ENCODE measurements at regions of chrX and their contacts with region 1.

Region 1: DNA sequence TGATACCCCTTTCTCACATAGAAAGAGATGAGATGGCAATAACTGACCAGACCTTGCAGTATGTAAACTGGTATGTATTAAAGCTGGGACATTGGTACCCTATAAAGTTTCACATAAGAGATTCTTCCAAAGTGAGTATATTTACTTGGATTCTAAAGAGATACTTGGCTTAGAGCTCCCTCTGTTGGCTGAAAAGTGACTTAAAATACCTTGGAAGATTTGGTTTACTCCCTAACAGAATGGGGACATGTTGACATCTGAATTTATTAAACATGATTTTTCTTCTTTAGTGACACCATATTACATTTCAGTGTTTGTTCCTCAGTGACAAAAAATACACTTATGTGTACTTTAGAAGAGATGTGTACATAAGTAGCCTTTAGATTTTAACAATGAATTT is 47.9 kb upstream of the RGN start:
- DNase-seq: peak; percentile 68
- ATAC-seq: no peak
- H3K4me3 ChIP-seq: no peak overlapping the region
- H3K27ac ChIP-seq: no peak overlapping the region
- H3K4me1 ChIP-seq: no peaks in the 10 kb centered on the region
- H3K27me3 ChIP-seq: peaks cover 8% of the 10 kb centered on the region
- CTCF ChIP-seq: peak; percentile 74
- POLR2A ChIP-seq: no peak
- RAD21 ChIP-seq: peak; percentile 73

Region 2: DNA sequence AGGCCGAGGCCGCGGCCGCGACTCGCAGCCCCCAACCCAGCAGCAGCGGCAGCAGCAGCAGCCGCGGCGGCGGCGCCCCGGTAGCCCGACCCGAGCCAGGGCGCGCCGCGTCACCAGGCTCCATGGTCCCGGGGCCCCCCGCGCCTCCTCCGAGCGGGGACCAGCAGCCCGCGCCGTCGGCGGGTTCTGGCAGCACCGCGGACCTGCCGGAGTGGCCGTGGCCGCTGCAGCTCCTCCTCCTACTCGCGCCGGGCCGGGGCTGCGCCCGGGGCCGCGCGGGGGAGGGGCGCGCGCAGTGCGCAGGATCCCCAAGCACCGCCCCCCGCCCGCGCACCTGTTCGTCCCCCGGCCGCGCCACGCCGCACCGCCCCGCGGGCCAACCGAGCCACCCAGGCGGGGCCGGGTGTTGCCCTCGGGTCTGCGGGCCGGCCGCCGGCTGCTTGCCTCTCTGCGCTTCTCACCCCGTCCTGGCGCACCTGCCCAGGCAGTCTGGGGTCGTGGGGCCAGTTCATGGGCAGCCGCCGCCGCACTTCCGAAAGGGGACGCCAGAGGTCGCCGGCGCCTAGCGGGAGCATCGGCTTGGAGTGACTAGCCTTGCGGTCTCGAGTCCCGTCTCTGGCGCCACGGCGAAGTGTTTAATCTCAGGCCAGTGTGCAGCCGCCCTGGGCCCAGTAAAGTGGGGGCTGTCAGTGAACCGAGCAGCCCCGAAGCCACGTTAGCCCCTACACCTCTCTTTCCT is 271.3 kb before region 1 on chrX and contains the start of gene SLC9A7:
- CTCF ChIA-PET with region 1: interaction called, 3 read pairs
- POLR2A ChIA-PET with region 1: no interaction called
- dilution Hi-C with region 1: no loop called
- in situ Hi-C with region 1: no loop called
- intact Hi-C with region 1: loop called (anchors 1 kb)
- DNase-seq: peak; percentile 61
- ATAC-seq: peak; percentile 86
- H3K4me3 ChIP-seq: peak within 1 kb of the TSS; percentile 83
- H3K27ac ChIP-seq: peak within 1 kb of the TSS; percentile 33; the same call in 1 of the 2 replicates
- H3K4me1 ChIP-seq: peaks cover 5% of the 10 kb centered on the region
- H3K27me3 ChIP-seq: no peaks in the 10 kb centered on the region
- CTCF ChIP-seq: peak; percentile 77
- POLR2A ChIP-seq: no peak
- RAD21 ChIP-seq: peak; percentile 92
- total RNA-seq, gene SLC9A7: 67.5 and 76.4 TPM in 2 replicates

Region 3: DNA sequence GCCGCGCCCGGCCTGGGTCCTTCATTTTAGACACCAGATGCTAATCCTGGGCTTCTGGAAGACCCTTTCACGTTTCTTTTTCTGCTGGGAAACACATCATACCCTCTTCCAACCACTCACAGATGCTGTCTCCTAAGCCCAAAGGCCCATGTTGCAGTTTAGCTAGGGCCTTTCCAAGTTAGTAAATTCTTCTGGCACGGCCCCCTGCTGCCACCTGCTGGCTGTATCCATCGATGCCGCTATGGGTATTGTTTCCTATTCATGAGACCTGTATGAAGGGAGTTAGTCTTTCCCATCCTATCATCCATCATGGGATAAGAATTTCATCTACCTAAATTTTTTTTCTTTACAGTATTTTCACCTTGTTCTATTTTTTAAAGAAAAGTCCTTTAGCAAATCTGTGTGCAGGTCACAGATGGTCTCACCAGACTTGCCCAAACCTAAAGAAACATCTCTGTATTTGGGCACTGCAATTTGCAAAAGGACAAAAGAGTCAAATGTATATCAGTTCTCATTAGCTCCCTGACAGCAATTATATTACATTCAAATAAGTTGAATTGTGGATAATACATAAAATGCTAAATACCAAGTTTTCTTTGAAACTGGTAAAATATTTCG is 233.7 kb before region 1 on chrX:
- CTCF ChIA-PET with region 1: interaction called, 4 read pairs
- POLR2A ChIA-PET with region 1: interaction called, 3 read pairs
- dilution Hi-C with region 1: no loop called
- in situ Hi-C with region 1: no loop called
- intact Hi-C with region 1: loop called (anchors 2 kb)
- DNase-seq: peak; percentile 64
- ATAC-seq: peak; percentile 71
- H3K4me3 ChIP-seq: no peak overlapping the region
- H3K27ac ChIP-seq: no peak overlapping the region
- H3K4me1 ChIP-seq: 0 out of 2 replicates have a peak, but pooled peaks cover 2% of the 10 kb centered on the region
- H3K27me3 ChIP-seq: no peaks in the 10 kb centered on the region; the same call in 1 of the 2 replicates
- CTCF ChIP-seq: peak; percentile 76
- POLR2A ChIP-seq: no peak
- RAD21 ChIP-seq: peak; percentile 90

Region 4: DNA sequence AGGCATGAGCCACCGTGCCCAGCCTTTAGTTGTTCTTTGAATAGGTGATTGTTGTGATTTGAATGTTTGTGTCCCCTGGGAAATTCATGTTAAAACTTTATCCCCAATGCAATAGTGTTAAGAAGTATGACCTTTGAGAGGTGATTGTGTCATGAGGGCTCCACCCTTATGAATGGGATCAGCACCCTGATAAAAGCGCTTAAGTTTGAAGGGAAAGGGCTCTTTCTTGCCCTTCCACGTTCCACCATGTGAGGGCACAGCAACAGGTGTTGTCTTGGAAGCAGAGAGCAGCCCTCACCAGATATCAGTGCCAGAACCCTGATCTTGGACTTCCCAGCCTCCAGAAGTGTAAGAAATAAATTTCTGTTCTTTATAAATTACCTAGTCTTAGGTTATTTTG is 227.2 kb before region 1 on chrX:
- CTCF ChIA-PET with region 1: interaction called, 4 read pairs
- POLR2A ChIA-PET with region 1: interaction called, 3 read pairs
- dilution Hi-C with region 1: no loop called
- in situ Hi-C with region 1: no loop called
- intact Hi-C with region 1: loop called (anchors 1 kb)
- DNase-seq: no peak
- ATAC-seq: no peak
- H3K4me3 ChIP-seq: no peak overlapping the region
- H3K27ac ChIP-seq: no peak overlapping the region
- H3K4me1 ChIP-seq: no peaks in the 10 kb centered on the region
- H3K27me3 ChIP-seq: no peaks in the 10 kb centered on the region; the same call in none of the 2 replicates
- CTCF ChIP-seq: peak; percentile 25; the same call in 1 of the 2 replicates
- POLR2A ChIP-seq: no peak
- RAD21 ChIP-seq: no peak; the same call in 1 of the 2 replicates

Region 5: GRCh38 chrX:46903458-46904242 is 126.7 kb before region 1 on chrX:
- CTCF ChIA-PET with region 1: interaction called, 6 read pairs
- POLR2A ChIA-PET with region 1: no interaction called
- dilution Hi-C with region 1: no loop called
- in situ Hi-C with region 1: loop called (anchors 5 kb)
- intact Hi-C with region 1: loop called (anchors 2 kb)
- DNase-seq: peak; percentile 70
- ATAC-seq: peak; percentile 98
- H3K4me3 ChIP-seq: peak overlapping the region; percentile 88
- H3K27ac ChIP-seq: no peak overlapping the region
- H3K4me1 ChIP-seq: no peaks in the 10 kb centered on the region
- H3K27me3 ChIP-seq: peaks cover 8% of the 10 kb centered on the region
- CTCF ChIP-seq: peak; percentile 55
- POLR2A ChIP-seq: no peak
- RAD21 ChIP-seq: peak; percentile 61

Region 6: DNA sequence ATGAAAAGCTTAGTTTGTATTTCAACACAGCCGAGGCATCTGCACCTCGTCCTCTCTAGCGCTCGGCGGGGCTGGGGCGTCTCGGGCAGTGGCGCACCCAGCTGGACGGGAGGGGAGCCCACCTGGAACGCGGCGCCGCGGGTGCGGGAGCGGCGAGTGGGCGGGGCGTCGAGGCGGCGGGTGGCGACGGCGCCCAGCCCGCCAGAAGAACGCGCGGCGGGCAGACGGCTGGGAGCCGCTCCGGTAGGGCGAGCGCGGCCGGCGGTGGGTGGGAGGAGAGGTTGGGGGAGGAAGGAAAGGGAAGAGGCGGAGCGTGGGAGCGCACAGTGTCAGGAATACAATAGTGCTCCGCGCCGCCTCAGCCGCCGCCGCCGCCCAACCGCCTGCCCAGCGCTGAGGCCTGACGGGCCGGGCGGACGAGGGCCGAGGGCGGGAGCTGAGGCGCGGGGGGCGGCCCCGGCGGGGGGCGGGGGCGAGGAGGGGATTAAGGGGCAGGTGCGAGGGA is 118.2 kb before region 1 on chrX and contains the start of gene JADE3:
- CTCF ChIA-PET with region 1: interaction called, 4 read pairs
- POLR2A ChIA-PET with region 1: no interaction called
- dilution Hi-C with region 1: no loop called
- in situ Hi-C with region 1: loop called (anchors 5 kb)
- intact Hi-C with region 1: loop called (anchors 2 kb)
- DNase-seq: peak; percentile 56
- ATAC-seq: peak; percentile 87
- H3K4me3 ChIP-seq: peak within 1 kb of the TSS; percentile 91
- H3K27ac ChIP-seq: peak within 1 kb of the TSS; percentile 7; the same call in 1 of the 2 replicates
- H3K4me1 ChIP-seq: no peaks in the 10 kb centered on the region
- H3K27me3 ChIP-seq: peaks cover 9% of the 10 kb centered on the region
- CTCF ChIP-seq: no peak
- POLR2A ChIP-seq: no peak
- RAD21 ChIP-seq: no peak
- total RNA-seq, gene JADE3: 4.4 and 4.7 TPM in 2 replicates

Region 7: GRCh38 chrX:47093248-47093647 is 62.9 kb after region 1 on chrX:
- CTCF ChIA-PET with region 1: interaction called, 3 read pairs
- POLR2A ChIA-PET with region 1: no interaction called
- dilution Hi-C with region 1: no loop called
- in situ Hi-C with region 1: no loop called
- intact Hi-C with region 1: loop called (anchors 5 kb)
- DNase-seq: peak; percentile 55
- ATAC-seq: peak; percentile 65
- H3K4me3 ChIP-seq: no peak overlapping the region
- H3K27ac ChIP-seq: no peak overlapping the region
- H3K4me1 ChIP-seq: no peaks in the 10 kb centered on the region
- H3K27me3 ChIP-seq: peaks cover 11% of the 10 kb centered on the region
- CTCF ChIP-seq: peak; percentile 55
- POLR2A ChIP-seq: no peak
- RAD21 ChIP-seq: peak; percentile 61